ENCODE measurements at regions of chr14 and their contacts with region 1.

Region 1: DNA sequence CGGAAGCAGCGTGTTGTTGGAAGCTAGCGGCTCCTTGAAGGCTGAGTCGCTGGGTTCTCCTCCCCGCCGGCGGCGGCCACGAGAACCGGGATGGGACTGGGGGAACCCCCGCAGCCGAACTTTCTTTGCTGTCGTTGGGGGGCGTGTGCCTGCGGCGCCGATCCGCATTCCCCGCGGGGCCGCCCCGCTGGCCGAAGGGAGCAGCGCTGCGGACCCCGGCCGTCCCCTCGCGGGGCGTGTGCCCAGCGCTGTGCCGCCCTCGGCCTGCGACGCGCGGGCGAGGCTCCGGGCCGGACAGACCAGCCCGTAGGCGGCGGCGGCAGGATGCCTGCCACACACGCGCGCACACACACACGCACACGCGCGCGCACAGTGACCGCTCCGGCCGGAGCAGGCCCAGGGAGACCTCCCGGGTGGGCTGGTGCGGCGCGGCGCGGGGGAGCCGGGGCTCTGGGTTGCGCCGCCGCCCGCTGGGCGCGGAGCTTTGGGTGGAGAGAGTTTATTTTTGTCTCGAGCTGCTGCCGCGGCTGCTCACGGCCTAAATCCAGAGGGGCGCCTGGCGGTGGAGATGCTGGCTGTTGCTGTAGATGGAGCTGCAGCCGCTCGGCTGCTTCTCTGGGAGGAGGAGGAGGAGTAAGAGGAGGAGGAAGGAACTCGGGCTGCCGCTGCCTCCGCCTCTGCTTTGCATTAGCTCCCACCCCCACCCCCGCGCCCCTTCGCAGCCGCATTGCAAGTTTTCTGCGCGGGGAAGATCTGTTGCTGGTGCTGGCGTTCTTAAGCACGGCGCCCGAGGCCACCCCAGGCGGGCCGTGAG is at the start of gene SAMD4A:
- DNase-seq: no peak
- ATAC-seq: peak; percentile 67
- H3K4me3 ChIP-seq: peak within 1 kb of the TSS; percentile 64 to 79
- H3K27ac ChIP-seq: peak within 1 kb of the TSS; percentile 84
- H3K4me1 ChIP-seq: peaks cover 22% of the 10 kb centered on the region
- H3K27me3 ChIP-seq: no peaks in the 10 kb centered on the region
- CTCF ChIP-seq: peak; percentile 52
- total RNA-seq, gene SAMD4A: 15.2 TPM

Region 2: DNA sequence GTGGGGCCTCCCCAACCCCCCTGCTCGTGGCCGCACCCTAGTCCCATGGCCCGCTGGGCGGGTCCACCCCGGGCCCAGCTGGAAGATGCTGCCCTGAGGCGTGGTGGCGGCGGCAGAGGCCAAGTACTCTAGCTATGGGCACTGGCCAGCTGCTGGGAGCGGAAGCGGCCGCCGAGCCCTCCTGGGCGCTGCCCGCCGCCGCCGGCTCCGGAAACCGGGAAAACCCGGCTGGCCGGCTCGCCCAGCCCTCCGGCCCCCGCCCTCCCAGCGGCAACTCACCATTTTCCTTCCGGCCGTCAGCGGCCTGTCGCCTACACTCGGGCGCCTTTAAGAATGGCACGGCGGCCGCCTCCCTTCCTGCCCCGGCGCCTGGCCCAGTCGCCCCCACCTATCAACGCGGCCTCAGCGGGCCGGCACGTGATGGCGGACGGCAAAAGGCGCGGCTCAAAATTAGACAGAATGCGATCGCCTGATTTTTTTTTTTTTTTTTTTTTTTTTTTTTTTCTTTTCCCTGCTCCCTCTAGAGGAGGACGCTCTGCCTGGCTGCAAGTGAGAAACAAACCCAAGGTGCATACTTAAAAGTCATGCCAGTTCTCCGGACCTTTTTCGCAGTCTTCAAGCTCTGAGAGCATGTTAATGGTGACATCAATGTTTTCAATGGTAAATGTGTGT is 77.8 kb before region 1 on chr14 and contains the start of gene GMFB:
- CTCF ChIA-PET with region 1: no interaction called
- POLR2A ChIA-PET with region 1: no interaction called
- in situ Hi-C with region 1: no loop called
- intact Hi-C with region 1: no loop called
- DNase-seq: peak; percentile 54
- ATAC-seq: peak; percentile 96
- H3K4me3 ChIP-seq: peak within 1 kb of the TSS; percentile 81 to 94
- H3K27ac ChIP-seq: peak within 1 kb of the TSS; percentile 95
- H3K4me1 ChIP-seq: peaks cover 11% of the 10 kb centered on the region
- H3K27me3 ChIP-seq: no peaks in the 10 kb centered on the region
- CTCF ChIP-seq: peak; percentile 42
- total RNA-seq, gene GMFB: 54.2 TPM

Region 3: DNA sequence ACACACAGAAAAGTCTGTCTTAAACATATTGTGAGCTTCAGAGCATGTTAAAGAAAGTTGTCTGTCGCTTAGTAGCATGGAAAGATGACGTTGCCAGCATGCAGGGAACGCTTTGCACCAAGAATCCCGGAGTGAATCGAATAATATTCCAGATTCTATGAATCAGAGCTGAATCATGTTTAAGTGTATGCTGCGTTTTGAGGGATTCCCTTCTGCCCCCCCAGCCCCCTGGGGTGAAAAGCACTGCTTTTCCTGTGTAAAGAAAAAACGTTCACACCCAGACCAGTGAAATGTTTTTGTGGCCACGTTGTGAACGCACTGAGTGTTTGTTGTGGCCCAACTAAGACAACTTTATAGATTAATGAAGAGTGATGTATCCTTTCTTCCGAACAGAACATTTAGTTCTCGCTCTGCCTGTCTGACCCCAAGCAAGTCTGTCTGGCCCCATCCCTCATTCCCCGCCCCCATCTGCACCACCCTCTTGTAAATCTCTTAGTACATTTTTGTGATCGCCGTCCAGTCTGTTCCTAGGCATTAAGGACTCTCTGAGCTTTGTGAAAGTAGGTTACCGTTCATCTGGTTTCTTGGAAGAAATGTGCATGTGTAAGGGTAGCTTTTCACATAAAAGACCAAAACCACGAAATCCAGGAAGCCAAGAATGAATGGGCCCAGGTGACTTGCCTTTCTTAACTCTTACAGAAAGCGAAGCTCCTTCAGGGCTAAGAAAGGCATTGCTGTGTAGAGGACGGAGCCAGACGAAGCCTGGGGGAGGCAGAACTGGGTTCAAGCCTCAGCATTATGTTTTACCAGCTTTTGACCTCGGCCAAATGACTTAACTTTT is 103.3 kb after region 1 on chr14:
- CTCF ChIA-PET with region 1: no interaction called
- POLR2A ChIA-PET with region 1: interaction called, 10 read pairs
- in situ Hi-C with region 1: no loop called
- intact Hi-C with region 1: no loop called
- DNase-seq: no peak
- ATAC-seq: no peak
- H3K4me3 ChIP-seq: no peak overlapping the region
- H3K27ac ChIP-seq: 0 out of 2 replicates have a peak overlapping the region, but pooled peaks have one; percentile 39
- H3K4me1 ChIP-seq: peaks cover 14% of the 10 kb centered on the region
- H3K27me3 ChIP-seq: no peaks in the 10 kb centered on the region
- CTCF ChIP-seq: no peak

Region 4: DNA sequence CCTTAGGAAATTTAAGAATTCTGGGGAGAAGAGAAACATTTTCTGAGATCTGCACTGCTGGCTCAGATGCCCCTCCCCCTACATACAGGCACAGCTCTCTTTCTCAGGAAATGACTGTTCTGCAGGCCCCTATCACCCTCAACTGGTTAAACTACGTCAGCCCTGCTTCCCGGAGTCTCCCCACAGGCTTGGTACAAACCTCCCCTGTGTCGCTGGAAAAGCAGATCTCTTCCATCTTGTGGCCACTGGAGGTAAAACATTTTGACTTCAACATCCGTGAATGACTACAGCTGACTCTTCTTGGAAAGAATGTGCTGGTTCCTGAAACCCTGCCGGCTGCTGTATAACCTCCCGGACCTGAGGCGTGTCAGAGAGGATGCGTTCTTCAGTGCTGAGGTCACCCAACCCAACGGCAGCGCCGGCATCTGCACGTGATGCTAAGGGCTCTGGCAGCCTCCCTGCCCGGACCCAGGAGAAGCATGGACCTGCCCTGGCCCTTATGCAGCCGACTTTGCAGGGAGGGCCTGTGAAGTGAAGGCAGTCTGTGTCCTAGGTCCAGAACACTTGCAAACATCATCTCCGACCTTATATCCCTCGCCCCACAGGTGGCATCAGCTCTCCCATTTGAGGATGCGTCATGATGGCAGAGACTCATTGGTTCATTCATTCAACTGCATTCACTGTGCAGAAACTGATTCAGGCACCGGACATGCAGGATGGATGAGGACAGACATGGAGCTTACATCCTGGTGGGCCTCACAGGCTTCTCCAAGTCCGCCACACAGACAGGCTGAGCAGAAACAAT is 206.8 kb after region 1 on chr14:
- CTCF ChIA-PET with region 1: interaction called, 17 read pairs
- POLR2A ChIA-PET with region 1: no interaction called
- in situ Hi-C with region 1: no loop called
- intact Hi-C with region 1: loop called (anchors 1 kb)
- DNase-seq: peak; percentile 94
- ATAC-seq: peak; percentile 90
- H3K4me3 ChIP-seq: peak overlapping the region in 1 of 2 experiments; percentile 25; a peak in 2 of 4 replicates
- H3K27ac ChIP-seq: peak overlapping the region; percentile 73
- H3K4me1 ChIP-seq: peaks cover 17% of the 10 kb centered on the region
- H3K27me3 ChIP-seq: no peaks in the 10 kb centered on the region
- CTCF ChIP-seq: no peak; the same call in none of the 2 replicates

Region 5: DNA sequence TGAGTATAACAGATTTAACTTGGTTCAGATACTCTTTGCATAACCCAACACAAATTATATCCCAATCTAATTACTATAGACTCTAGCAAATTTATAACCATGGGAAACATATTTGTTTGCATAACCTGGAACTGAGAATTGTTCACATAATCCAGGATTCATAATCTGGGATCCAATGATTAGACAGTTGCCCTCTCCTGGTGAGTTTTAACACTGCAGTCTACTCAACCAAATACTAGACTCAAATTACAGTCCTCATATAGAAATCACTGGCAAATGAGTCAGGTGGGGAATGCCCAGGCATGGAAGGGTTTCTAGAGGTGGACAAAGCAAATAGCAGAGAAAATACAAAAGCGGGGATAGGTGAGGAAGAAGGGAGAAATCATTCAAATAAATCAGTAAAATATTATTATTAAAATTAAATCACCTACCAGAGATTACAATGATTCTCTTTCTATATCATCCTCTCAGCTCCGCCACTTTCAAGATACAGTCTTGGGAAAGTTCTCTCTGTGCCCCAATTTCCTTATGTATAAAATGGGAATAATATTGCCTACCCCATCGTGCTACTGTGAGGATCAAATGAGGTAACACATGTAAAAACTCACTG is 326.6 kb after region 1 on chr14:
- CTCF ChIA-PET with region 1: no interaction called
- POLR2A ChIA-PET with region 1: no interaction called
- in situ Hi-C with region 1: no loop called
- intact Hi-C with region 1: loop called (anchors 10 kb)
- DNase-seq: no peak
- ATAC-seq: peak; percentile 70
- H3K4me3 ChIP-seq: no peak overlapping the region
- H3K27ac ChIP-seq: no peak overlapping the region
- H3K4me1 ChIP-seq: no peaks in the 10 kb centered on the region
- H3K27me3 ChIP-seq: no peaks in the 10 kb centered on the region
- CTCF ChIP-seq: peak; percentile 73